ENCODE measurements at regions of chr3 and their contacts with region 1.

Region 1: DNA sequence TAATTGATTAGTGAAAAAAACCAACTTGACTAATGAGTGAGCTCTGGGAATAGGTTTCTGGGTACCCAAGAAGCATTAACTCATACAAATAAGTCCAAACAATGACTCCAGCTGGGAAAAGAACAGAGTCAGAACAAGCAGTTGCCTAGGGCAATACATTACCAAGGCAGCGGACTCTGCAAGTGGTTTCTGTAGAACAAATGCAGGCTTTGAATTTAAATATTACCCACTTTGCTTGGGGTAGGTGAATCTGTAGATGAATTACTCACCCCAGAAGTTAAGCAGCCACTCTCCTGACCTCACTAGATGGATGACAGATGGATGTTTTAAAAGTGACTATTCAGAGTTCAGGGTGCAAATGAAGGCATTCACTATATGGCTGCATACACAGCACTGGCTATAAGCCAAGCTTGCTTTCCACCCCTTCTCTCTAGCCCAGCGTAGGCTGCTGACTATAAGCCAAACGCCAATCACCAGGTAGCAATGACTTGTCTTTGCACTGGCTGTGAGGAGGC is 73.1 kb upstream of the BHLHE40 start:
- DNase-seq: no peak
- H3K4me3 Mint-ChIP-seq: peak overlapping the region; percentile 64
- H3K27ac Mint-ChIP-seq: peak overlapping the region; percentile 94
- H3K4me1 Mint-ChIP-seq: peaks cover 90% of the 10 kb centered on the region
- H3K27me3 Mint-ChIP-seq: no peaks in the 10 kb centered on the region

Region 2: GRCh38 chr3:4406746-4407568 is 499.2 kb before region 1 on chr3:
- intact Hi-C with region 1: loop called (anchors 5 kb)
- DNase-seq: no peak
- H3K4me3 Mint-ChIP-seq: no peak overlapping the region
- H3K27ac Mint-ChIP-seq: no peak overlapping the region
- H3K4me1 Mint-ChIP-seq: peaks cover 57% of the 10 kb centered on the region
- H3K27me3 Mint-ChIP-seq: peaks cover 1% of the 10 kb centered on the region

Region 3: DNA sequence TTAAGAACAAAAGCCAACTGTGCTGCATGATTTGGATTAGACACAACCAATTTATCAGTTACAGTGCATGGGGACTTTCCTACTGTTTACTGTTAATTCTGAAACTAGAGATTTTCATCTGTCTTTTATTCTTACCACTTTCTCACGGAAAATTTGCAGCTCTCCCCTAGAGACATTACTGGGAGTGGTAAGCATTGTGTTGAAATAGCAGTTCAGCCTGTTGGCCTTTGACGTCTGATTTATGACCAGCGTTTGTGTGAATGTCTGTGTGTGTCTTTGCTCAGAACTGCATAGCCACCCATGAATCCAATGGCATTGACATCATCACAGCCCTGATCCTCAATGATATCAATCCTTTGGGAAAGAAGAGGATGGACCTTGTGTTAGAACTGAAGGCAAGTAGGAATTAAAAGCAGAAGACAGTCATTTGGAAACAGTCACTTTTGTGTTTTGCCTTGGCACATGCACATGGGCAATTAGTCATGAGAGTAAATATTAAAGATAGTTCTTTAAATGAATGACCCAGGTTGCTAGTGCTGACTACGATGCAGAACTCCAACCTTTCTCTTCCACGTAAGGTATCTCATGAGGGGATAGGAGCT is 129.1 kb before region 1 on chr3:
- intact Hi-C with region 1: loop called (anchors 1 kb)
- DNase-seq: peak; percentile 32
- H3K4me3 Mint-ChIP-seq: peak overlapping the region; percentile 73
- H3K27ac Mint-ChIP-seq: peak overlapping the region; percentile 98
- H3K4me1 Mint-ChIP-seq: peaks cover 82% of the 10 kb centered on the region
- H3K27me3 Mint-ChIP-seq: no peaks in the 10 kb centered on the region

Region 4: GRCh38 chr3:4928277-4928789 is 22.2 kb after region 1 on chr3:
- intact Hi-C with region 1: loop called (anchors 1 kb)
- DNase-seq: no peak
- H3K4me3 Mint-ChIP-seq: peak overlapping the region; percentile 20
- H3K27ac Mint-ChIP-seq: peak overlapping the region; percentile 79
- H3K4me1 Mint-ChIP-seq: peaks cover 60% of the 10 kb centered on the region
- H3K27me3 Mint-ChIP-seq: no peaks in the 10 kb centered on the region

Region 5: GRCh38 chr3:5035692-5036391 is 129.7 kb after region 1 on chr3:
- intact Hi-C with region 1: loop called (anchors 5 kb)
- DNase-seq: no peak
- H3K4me3 Mint-ChIP-seq: no peak overlapping the region
- H3K27ac Mint-ChIP-seq: peak overlapping the region; percentile 55
- H3K4me1 Mint-ChIP-seq: peaks cover 55% of the 10 kb centered on the region
- H3K27me3 Mint-ChIP-seq: no peaks in the 10 kb centered on the region

Region 6: DNA sequence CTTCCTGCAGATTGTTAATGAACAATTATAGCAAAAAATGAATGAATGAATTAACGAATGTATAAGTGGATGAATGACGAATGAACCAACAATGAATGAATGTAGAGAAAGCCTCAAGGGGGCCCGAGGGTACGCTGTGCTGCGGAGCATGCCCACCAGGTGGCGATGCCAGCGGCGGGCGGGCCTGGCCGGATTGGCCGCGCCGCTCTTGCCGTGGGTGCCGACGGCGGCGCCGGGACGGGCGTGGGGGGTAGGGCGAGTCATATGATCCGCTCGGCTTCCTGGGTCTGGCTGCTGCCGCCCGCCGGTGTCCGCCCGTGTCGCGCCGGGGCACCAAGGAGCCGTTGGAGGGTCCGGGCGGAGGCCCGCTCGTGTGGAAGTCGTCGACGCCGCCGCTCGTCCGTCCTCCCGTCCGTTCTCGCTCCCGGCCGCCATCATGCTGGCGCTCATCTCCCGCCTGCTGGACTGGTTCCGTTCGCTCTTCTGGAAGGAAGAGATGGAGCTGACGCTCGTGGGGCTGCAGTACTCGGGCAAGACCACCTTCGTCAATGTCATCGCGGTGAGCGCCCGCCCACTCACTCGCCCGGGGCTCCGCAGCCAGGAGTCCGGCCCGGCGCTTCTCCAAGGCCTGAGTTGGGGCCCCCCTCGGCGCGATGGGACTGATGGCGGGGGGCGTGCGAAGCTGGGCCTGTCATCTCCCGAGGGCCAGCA is 216.0 kb after region 1 on chr3 and contains the start of gene ARL8B:
- intact Hi-C with region 1: loop called (anchors 5 kb)
- DNase-seq: peak; percentile 90
- H3K4me3 Mint-ChIP-seq: peak within 1 kb of the TSS; percentile 88
- H3K27ac Mint-ChIP-seq: peak within 1 kb of the TSS; percentile 87
- H3K4me1 Mint-ChIP-seq: peaks cover 40% of the 10 kb centered on the region
- H3K27me3 Mint-ChIP-seq: no peaks in the 10 kb centered on the region
- total RNA-seq, gene ARL8B: 43.4 and 51.0 TPM in 2 replicates

Measured in activated T-helper 1 cell treated with anti-CD3 and anti-CD28 coated beads, Interleukin-12 subunit alpha, Interleukin-12 subunit beta, Interleukin-2, Interleukin-4 antibody, amounts not matched to agents 30 ng/mL and 10 ng/mL and 1 ng/mL, durations not matched to agents 14 hours and 24 hours and 36 hours (primary cell).